Activated CD8-positive, alpha-beta T cell treated with anti-CD3 and anti-CD28 coated beads for 36 hours (primary cell): ENCODE measurements at regions of chr1 and their contacts with region 1.

Region 1: DNA sequence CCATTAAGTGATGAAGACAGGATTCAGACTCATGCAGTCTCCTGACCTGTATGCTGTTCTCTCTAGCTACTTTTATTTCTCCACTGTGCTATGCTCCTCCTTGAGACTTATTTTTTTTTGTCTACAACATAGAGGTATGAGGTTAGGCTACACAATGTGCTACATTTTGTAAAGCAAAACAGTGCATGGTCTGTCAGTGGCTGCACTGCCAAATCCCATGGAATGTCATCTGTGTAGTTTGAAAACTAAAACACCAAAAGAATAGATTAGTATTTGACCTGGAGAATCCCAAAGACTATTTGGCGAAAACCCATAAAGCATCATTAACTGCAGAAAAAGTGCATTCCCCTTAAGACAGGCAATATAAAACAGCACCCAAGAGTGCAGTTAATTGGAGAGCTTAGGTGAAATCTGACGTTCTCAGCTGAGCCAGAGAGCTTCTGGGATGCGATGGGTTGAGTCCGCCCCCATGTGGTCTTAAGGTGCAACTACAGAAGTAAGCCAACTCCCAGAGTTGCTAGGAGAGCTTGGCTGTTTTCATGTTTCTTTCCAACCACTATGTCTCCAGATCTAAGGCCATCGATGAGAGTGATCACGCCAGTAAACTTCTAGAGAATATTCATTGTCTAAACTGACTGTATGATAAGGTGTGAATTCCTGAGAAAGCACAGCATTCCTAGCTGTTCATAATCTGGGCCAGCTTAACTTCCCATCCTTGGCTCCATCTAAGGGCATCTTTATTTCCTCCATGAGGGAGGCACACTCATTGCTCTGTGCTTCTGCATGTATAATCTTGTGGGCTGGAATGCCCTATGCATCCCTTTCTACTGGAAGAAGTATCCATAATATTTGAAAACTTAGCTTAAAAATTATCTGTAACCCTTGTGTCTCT is 20.7 kb upstream of the CYP2J2 start:
- DNase-seq: peak; percentile 66
- ATAC-seq: peak; percentile 93
- H3K4me3 Mint-ChIP-seq: no peak overlapping the region
- H3K27ac Mint-ChIP-seq: no peak overlapping the region
- H3K4me1 Mint-ChIP-seq: no peaks in the 10 kb centered on the region
- H3K27me3 Mint-ChIP-seq: peaks cover 2% of the 10 kb centered on the region
- CTCF ChIP-seq: peak; percentile 75

Region 2: GRCh38 chr1:59879574-59879973 is 67.7 kb before region 1 on chr1:
- CTCF ChIA-PET with region 1: interaction called, 131 read pairs
- POLR2A ChIA-PET with region 1: no interaction called
- intact Hi-C with region 1: loop called (anchors 1 kb)
- DNase-seq: peak; percentile 81
- ATAC-seq: peak; percentile 74
- H3K4me3 Mint-ChIP-seq: no peak overlapping the region
- H3K27ac Mint-ChIP-seq: no peak overlapping the region
- H3K4me1 Mint-ChIP-seq: peaks cover 2% of the 10 kb centered on the region
- H3K27me3 Mint-ChIP-seq: no peaks in the 10 kb centered on the region
- CTCF ChIP-seq: peak; percentile 28

Region 3: GRCh38 chr1:59892841-59893811 is 54.2 kb before region 1 on chr1:
- CTCF ChIA-PET with region 1: interaction called, 15 read pairs
- POLR2A ChIA-PET with region 1: no interaction called
- intact Hi-C with region 1: no loop called
- DNase-seq: peak; percentile 6
- ATAC-seq: peak; percentile 34
- H3K4me3 Mint-ChIP-seq: no peak overlapping the region
- H3K27ac Mint-ChIP-seq: peak overlapping the region; percentile 40
- H3K4me1 Mint-ChIP-seq: peaks cover 17% of the 10 kb centered on the region
- H3K27me3 Mint-ChIP-seq: no peaks in the 10 kb centered on the region
- CTCF ChIP-seq: no peak

Region 4: GRCh38 chr1:59903141-59903754 is 44.0 kb before region 1 on chr1:
- CTCF ChIA-PET with region 1: interaction called, 41 read pairs
- POLR2A ChIA-PET with region 1: interaction called, 4 read pairs
- intact Hi-C with region 1: loop called (anchors 5 kb)
- DNase-seq: peak; percentile 34
- ATAC-seq: peak; percentile 80
- H3K4me3 Mint-ChIP-seq: no peak overlapping the region
- H3K27ac Mint-ChIP-seq: no peak overlapping the region
- H3K4me1 Mint-ChIP-seq: no peaks in the 10 kb centered on the region
- H3K27me3 Mint-ChIP-seq: peaks cover 2% of the 10 kb centered on the region
- CTCF ChIP-seq: peak; percentile 41

Region 5: DNA sequence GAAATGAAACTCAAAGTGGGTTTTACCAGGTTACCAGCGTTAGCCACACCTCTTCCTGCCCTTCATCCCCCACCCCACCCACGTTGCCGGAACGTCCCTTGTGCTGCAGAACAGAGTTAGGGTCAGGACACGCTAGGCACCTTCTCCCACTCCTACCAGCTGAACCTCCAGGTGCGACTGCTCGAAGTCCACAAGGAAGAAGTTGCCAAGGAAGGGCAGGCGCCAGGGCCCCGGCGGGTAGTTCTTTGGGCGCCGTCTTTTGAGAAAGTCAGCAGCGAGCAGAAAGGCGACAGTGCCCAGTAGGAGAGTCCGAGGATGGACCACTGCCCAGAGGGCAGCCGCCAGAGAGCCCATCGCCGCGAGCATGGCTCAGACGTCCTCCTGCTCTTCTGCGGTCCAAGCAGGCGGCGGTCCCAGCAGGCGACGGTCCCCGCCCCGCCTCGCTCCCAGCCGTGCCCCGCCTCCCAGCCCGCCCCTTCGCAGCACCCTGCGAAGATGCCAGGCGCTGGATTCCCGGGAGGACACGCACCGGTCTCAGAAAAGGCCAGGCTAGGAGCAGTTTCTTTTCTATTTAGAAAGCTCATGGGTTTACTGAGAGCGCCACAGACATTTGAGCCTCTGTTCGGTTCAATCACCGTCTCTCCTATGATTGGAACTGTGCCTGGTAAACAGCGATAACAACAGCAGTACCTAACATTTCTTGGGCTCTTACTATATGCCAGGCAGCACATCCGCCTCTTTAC is 20.7 kb before region 1 on chr1 and contains the start of gene CYP2J2:
- CTCF ChIA-PET with region 1: interaction called, 11 read pairs
- POLR2A ChIA-PET with region 1: no interaction called
- intact Hi-C with region 1: no loop called
- DNase-seq: peak; percentile 58
- ATAC-seq: peak; percentile 87
- H3K4me3 Mint-ChIP-seq: peak within 1 kb of the TSS; percentile 78
- H3K27ac Mint-ChIP-seq: peak within 1 kb of the TSS; percentile 36
- H3K4me1 Mint-ChIP-seq: peaks cover 11% of the 10 kb centered on the region
- H3K27me3 Mint-ChIP-seq: peaks cover 21% of the 10 kb centered on the region
- CTCF ChIP-seq: no peak
- total RNA-seq, gene CYP2J2: 0.83 to 1.4 TPM

Region 6: GRCh38 chr1:59971464-59971911 is 24.2 kb after region 1 on chr1:
- CTCF ChIA-PET with region 1: interaction called, 12 read pairs
- POLR2A ChIA-PET with region 1: no interaction called
- intact Hi-C with region 1: no loop called
- DNase-seq: peak; percentile 49
- ATAC-seq: peak; percentile 56
- H3K4me3 Mint-ChIP-seq: no peak overlapping the region
- H3K27ac Mint-ChIP-seq: no peak overlapping the region
- H3K4me1 Mint-ChIP-seq: peaks cover 3% of the 10 kb centered on the region
- H3K27me3 Mint-ChIP-seq: peaks cover 12% of the 10 kb centered on the region
- CTCF ChIP-seq: peak; percentile 94